Activated CD4-positive, alpha-beta T cell treated with anti-CD3 and anti-CD28 coated beads for 36 hours (primary cell): ENCODE measurements at regions of chr1 and their contacts with region 1.

Region 1: GRCh38 chr1:37807555-37808368 is at the starts of genes C1orf122 and YRDC:
- DNase-seq: peak; percentile 95
- ATAC-seq: peak; percentile 92
- H3K4me3 Mint-ChIP-seq: peak within 1 kb of the TSS; percentile 90
- H3K27ac Mint-ChIP-seq: peak within 1 kb of the TSS; percentile 93
- H3K4me1 Mint-ChIP-seq: peaks cover 34% of the 10 kb centered on the region
- H3K27me3 Mint-ChIP-seq: no peaks in the 10 kb centered on the region
- total RNA-seq, gene C1orf122: 10.8 to 17.9 TPM
- total RNA-seq, gene YRDC: 22.9 to 36.3 TPM

Region 2: GRCh38 chr1:37655274-37655673 is 152.5 kb before region 1 on chr1:
- CTCF ChIA-PET with region 1: no interaction called
- POLR2A ChIA-PET with region 1: no interaction called
- intact Hi-C with region 1: no loop called
- DNase-seq: no peak
- ATAC-seq: no peak
- H3K4me3 Mint-ChIP-seq: no peak overlapping the region
- H3K27ac Mint-ChIP-seq: no peak overlapping the region
- H3K4me1 Mint-ChIP-seq: no peaks in the 10 kb centered on the region
- H3K27me3 Mint-ChIP-seq: peaks cover 2% of the 10 kb centered on the region

Region 3: DNA sequence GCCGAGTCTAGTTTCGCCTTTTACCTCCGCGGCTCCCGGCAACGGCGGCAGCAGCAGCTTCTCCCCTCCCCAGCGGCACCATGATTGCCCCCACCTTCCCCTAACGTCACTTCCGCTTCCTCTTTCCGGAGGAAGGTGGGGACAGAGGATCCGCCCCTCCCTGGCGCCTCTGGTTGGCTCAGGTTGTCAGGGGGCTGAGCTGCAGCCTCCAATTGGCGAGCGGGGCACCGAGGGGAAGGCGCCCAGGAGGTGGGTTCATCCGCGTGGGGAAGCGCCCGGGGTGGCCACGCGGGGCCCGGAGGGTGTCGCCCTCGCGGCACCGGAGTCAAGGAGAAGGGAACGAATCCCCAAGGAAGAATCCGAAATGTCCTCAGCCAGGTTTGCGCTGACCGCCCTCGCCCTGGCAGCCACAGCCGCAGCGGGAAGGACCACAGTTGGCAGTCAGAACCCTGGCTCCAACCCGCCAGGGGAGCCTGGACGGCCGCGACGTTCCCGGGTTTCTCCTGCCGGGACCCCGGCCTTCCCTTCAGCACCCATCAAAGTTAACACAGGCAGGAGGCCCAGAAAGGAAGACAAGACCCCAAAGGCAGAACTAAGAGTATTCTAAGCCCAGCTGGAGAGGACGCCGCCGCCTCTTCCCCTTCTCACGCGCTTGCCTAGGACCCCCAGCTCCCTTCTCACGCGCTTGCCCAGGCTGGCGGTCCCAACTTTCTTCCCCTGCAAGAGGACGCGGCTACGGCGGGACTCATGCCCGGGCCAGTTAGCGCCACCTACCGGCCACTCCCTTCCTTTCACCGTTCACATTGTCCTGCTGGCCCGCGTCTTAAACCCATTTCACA is 52.0 kb after region 1 on chr1 and contains the start of gene MTF1:
- CTCF ChIA-PET with region 1: interaction called, 25 read pairs
- POLR2A ChIA-PET with region 1: interaction called, 10 read pairs
- intact Hi-C with region 1: loop called (anchors 1 kb)
- DNase-seq: peak; percentile 98
- ATAC-seq: peak; percentile 98
- H3K4me3 Mint-ChIP-seq: peak within 1 kb of the TSS; percentile 87
- H3K27ac Mint-ChIP-seq: peak within 1 kb of the TSS; percentile 93
- H3K4me1 Mint-ChIP-seq: peaks cover 40% of the 10 kb centered on the region
- H3K27me3 Mint-ChIP-seq: no peaks in the 10 kb centered on the region
- total RNA-seq, gene MTF1: 16.1 to 23.8 TPM

Region 4: DNA sequence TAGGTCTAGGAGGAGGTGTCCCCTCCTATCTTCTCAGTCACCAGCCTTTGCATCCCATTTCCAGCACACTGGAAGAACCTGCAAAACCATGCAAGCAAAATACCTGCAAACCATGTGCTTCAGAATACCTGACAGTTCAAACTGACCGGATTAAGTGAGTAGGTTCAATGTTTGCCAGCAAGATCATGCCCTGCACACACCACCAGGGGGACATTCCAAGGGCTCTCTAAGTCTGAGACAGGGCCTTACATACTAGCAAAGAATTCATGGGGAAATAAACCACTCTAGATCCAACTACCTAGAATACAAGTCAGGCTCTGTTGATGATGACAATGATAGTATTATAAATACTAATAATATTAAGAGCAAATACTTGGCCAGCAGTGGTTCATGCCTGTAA is 111.5 kb after region 1 on chr1:
- CTCF ChIA-PET with region 1: no interaction called
- POLR2A ChIA-PET with region 1: no interaction called
- intact Hi-C with region 1: no loop called
- DNase-seq: peak; percentile 30
- ATAC-seq: no peak
- H3K4me3 Mint-ChIP-seq: no peak overlapping the region
- H3K27ac Mint-ChIP-seq: no peak overlapping the region
- H3K4me1 Mint-ChIP-seq: peaks cover 16% of the 10 kb centered on the region
- H3K27me3 Mint-ChIP-seq: no peaks in the 10 kb centered on the region

Region 5: GRCh38 chr1:37946703-37947360 is 139.1 kb after region 1 on chr1 and contains the start of gene INPP5B:
- CTCF ChIA-PET with region 1: no interaction called
- POLR2A ChIA-PET with region 1: no interaction called
- intact Hi-C with region 1: loop called in 1 of 2 experiments (anchors 1 kb)
- DNase-seq: peak; percentile 89
- ATAC-seq: peak; percentile 97
- H3K4me3 Mint-ChIP-seq: peak within 1 kb of the TSS; percentile 87
- H3K27ac Mint-ChIP-seq: peak within 1 kb of the TSS; percentile 98
- H3K4me1 Mint-ChIP-seq: peaks cover 17% of the 10 kb centered on the region
- H3K27me3 Mint-ChIP-seq: no peaks in the 10 kb centered on the region
- total RNA-seq, gene INPP5B: 27.7 to 28.9 TPM